ENCODE measurements at regions of chr15 and their contacts with region 1.

Region 1: GRCh38 chr15:78065284-78065872 is 12.1 kb downstream of the TBC1D2B start:
- DNase-seq: peak; percentile 99
- ATAC-seq: peak; percentile 96
- H3K4me3 ChIP-seq: peak overlapping the region in 1 of 3 experiments; percentile 2; a peak in 1 of 6 replicates
- H3K27ac ChIP-seq: peak overlapping the region; percentile 73
- H3K4me1 ChIP-seq: peaks cover 85% of the 10 kb centered on the region
- H3K27me3 ChIP-seq: no peaks in the 10 kb centered on the region
- CTCF ChIP-seq: peak; percentile 39
- EP300 ChIP-seq: peak; percentile 78 to 92
- POLR2A ChIP-seq: no peak
- RAD21 ChIP-seq: no peak

Region 2: GRCh38 chr15:78000091-78000926 is 65.1 kb before region 1 on chr15:
- CTCF ChIA-PET with region 1: no interaction called
- POLR2A ChIA-PET with region 1: no interaction called
- in situ Hi-C with region 1: no loop called
- intact Hi-C with region 1: loop called (anchors 1 kb)
- DNase-seq: peak; percentile 62
- ATAC-seq: peak; percentile 92
- H3K4me3 ChIP-seq: no peak overlapping the region
- H3K27ac ChIP-seq: no peak overlapping the region
- H3K4me1 ChIP-seq: no peaks in the 10 kb centered on the region
- H3K27me3 ChIP-seq: no peaks in the 10 kb centered on the region
- CTCF ChIP-seq: peak; percentile 94
- EP300 ChIP-seq: no peak
- POLR2A ChIP-seq: no peak
- RAD21 ChIP-seq: peak; percentile 93

Region 3: DNA sequence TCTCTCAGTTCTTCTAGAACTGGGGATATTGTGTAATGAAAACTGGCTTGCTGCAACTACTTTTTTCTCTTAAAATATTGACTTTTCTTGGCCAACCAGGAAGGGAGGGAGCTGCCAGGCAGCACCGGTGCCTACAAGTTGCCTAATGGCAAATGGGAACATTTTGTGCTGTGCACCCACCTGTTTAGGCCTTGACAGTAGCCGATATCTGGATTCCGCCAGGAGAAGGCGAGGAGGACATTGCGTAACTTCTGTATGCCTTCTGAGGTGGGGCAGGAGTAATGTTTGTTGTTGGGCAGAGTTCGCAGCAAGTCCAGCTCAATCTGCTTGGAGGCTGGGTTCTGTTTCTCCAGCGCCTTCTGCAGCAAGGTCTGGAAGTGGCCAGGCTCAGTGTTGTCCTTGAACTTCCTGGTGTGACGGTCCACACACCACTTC is 52.7 kb before region 1 on chr15:
- CTCF ChIA-PET with region 1: no interaction called
- POLR2A ChIA-PET with region 1: no interaction called
- in situ Hi-C with region 1: no loop called
- intact Hi-C with region 1: loop called (anchors 1 kb)
- DNase-seq: peak; percentile 66
- ATAC-seq: peak; percentile 87
- H3K4me3 ChIP-seq: no peak overlapping the region
- H3K27ac ChIP-seq: peak overlapping the region; percentile 28
- H3K4me1 ChIP-seq: peaks cover 17% of the 10 kb centered on the region
- H3K27me3 ChIP-seq: no peaks in the 10 kb centered on the region
- CTCF ChIP-seq: peak; percentile 13; the same call in 1 of the 2 replicates
- EP300 ChIP-seq: peak in 1 of 2 experiments; percentile 30; a peak in 1 of 4 replicates
- POLR2A ChIP-seq: no peak
- RAD21 ChIP-seq: 0 out of 2 replicates have a peak, but pooled peaks have one; percentile 19

Region 4: GRCh38 chr15:78035861-78036476 is 29.4 kb before region 1 on chr15:
- CTCF ChIA-PET with region 1: no interaction called
- POLR2A ChIA-PET with region 1: interaction called, 8 read pairs
- in situ Hi-C with region 1: no loop called
- intact Hi-C with region 1: loop called (anchors 1 kb)
- DNase-seq: peak; percentile 85
- ATAC-seq: peak; percentile 98
- H3K4me3 ChIP-seq: no peak overlapping the region; a peak in 1 of 6 replicates
- H3K27ac ChIP-seq: peak overlapping the region; percentile 61
- H3K4me1 ChIP-seq: peaks cover 45% of the 10 kb centered on the region
- H3K27me3 ChIP-seq: no peaks in the 10 kb centered on the region
- CTCF ChIP-seq: peak; percentile 14; the same call in 1 of the 2 replicates
- EP300 ChIP-seq: peak in 1 of 2 experiments; percentile 22; a peak in 1 of 4 replicates
- POLR2A ChIP-seq: no peak
- RAD21 ChIP-seq: no peak

Region 5: GRCh38 chr15:78093242-78094020 is 28.1 kb after region 1 on chr15:
- CTCF ChIA-PET with region 1: no interaction called
- POLR2A ChIA-PET with region 1: no interaction called
- in situ Hi-C with region 1: no loop called
- intact Hi-C with region 1: no loop called
- DNase-seq: no peak
- ATAC-seq: no peak
- H3K4me3 ChIP-seq: no peak overlapping the region
- H3K27ac ChIP-seq: no peak overlapping the region
- H3K4me1 ChIP-seq: peaks cover 26% of the 10 kb centered on the region
- H3K27me3 ChIP-seq: peaks cover 1 to 8% of the 10 kb centered on the region in 2 experiments; a peak in 3 of 5 replicates
- CTCF ChIP-seq: no peak
- EP300 ChIP-seq: no peak
- POLR2A ChIP-seq: no peak
- RAD21 ChIP-seq: no peak

Measured in HepG2 (cell line).